ENCODE measurements at regions of chr21 and their contacts with region 1.

Region 1: GRCh38 chr21:38755681-38756371 is 49.9 kb upstream of the ETS2 start:
- DNase-seq: peak; percentile 82
- ATAC-seq: peak; percentile 80
- H3K4me3 ChIP-seq: no peak overlapping the region
- H3K27ac ChIP-seq: peak overlapping the region; percentile 69 to 85
- H3K4me1 ChIP-seq: peaks cover 0 to 4% of the 10 kb centered on the region in 2 donors
- H3K27me3 ChIP-seq: no peaks in the 10 kb centered on the region

Region 2: GRCh38 chr21:38645282-38645681 is 110.5 kb before region 1 on chr21:
- intact Hi-C with region 1: no loop called
- DNase-seq: no peak
- ATAC-seq: no peak
- H3K4me3 ChIP-seq: no peak overlapping the region
- H3K27ac ChIP-seq: no peak overlapping the region
- H3K4me1 ChIP-seq: peaks cover 9 to 11% of the 10 kb centered on the region in 2 donors
- H3K27me3 ChIP-seq: no peaks in the 10 kb centered on the region

Region 3: DNA sequence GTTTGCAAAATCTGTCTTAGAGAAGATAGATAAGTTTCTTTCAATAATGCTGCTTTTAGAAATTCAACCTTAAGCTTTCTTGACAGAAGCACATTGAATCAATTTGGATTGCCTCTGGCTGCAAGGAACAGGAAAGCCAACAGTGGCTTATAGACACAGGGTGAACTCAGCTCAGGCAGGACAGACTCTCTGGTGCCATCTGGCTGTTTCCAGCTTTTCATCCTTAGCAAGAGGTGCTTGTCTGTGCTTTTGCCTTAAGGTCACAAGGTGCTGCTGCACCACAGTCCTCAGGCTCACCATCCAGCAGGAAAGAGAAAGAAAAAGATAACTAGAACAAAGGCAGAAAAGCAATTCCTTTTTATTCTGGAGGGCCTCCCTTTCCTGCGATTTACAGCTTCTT is 43.8 kb before region 1 on chr21:
- intact Hi-C with region 1: no loop called
- DNase-seq: no peak
- ATAC-seq: no peak
- H3K4me3 ChIP-seq: no peak overlapping the region
- H3K27ac ChIP-seq: no peak overlapping the region
- H3K4me1 ChIP-seq: peaks cover 0 to 2% of the 10 kb centered on the region in 2 donors
- H3K27me3 ChIP-seq: no peaks in the 10 kb centered on the region

Region 4: GRCh38 chr21:39004634-39005501 is 249.0 kb after region 1 on chr21:
- intact Hi-C with region 1: loop called in 1 of 2 experiments (anchors 10 kb)
- DNase-seq: peak in 1 of 2 donors; percentile 90
- ATAC-seq: peak; percentile 60
- H3K4me3 ChIP-seq: no peak overlapping the region
- H3K27ac ChIP-seq: peak overlapping the region; percentile 61 to 92
- H3K4me1 ChIP-seq: peaks cover 0 to 11% of the 10 kb centered on the region in 2 donors
- H3K27me3 ChIP-seq: no peaks in the 10 kb centered on the region